ENCODE measurements at regions of chr1 and their contacts with region 1.

Region 1: DNA sequence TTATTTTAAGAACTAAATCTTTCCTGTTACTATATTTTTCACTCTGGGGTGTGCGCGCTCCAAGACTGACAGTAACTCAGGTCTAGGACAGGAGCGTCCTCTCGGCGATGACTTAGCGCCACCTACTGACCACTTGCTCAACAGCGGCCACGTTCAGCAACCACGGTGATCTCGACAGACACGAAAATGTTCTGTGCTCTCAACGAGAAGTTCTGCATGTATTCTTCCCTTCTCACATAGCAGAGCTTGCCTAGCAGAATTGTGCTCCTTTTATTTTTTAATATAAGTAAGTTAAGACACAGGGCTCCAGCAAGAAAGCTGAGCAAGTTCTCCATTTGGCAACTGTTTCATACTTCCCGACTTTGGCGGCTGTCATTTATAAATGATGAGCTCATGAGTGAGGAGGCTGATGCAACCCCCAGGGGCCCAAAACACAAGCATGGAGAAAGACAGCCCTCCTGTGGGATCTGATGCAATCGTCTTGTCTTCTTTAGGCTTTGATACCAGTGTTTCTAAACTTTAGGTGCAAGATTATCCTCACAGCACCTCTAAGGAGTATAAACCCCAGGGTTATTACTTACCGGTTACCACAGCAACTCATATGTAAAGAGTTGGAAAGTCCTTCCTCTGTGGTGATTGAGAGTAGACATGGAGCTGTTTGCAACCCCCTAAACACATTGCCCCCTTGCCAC is 92.6 kb downstream of the HHIPL2 start:
- DNase-seq: peak; percentile 58 to 88 (median 82)
- ATAC-seq: peak; percentile 97
- H3K4me3 ChIP-seq: no peak overlapping the region
- H3K4me3 Mint-ChIP-seq: peak overlapping the region in 9 of 10 donors; percentile 0 to 75 (median 58)
- H3K27ac ChIP-seq: no peak overlapping the region
- H3K27ac Mint-ChIP-seq: peak overlapping the region; percentile 26 to 84 (median 65)
- H3K4me1 ChIP-seq: peaks cover 8 to 9% of the 10 kb centered on the region in 2 donors
- H3K4me1 Mint-ChIP-seq: peaks cover 8 to 31% (median 15%) of the 10 kb centered on the region in 7 donors
- H3K27me3 ChIP-seq: no peaks in the 10 kb centered on the region
- H3K27me3 Mint-ChIP-seq: peaks cover 0 to 4% (median 0%) of the 10 kb centered on the region in 5 donors

Region 2: GRCh38 chr1:221263831-221264767 is 1191.2 kb before region 1 on chr1:
- CTCF ChIA-PET with region 1: no interaction called
- POLR2A ChIA-PET with region 1: no interaction called
- intact Hi-C with region 1: loop called in 1 of 2 experiments (anchors 10 kb)
- DNase-seq: peak in 3 of 9 donors; percentile 1 to 19 (median 4)
- ATAC-seq: no peak
- H3K4me3 ChIP-seq: no peak overlapping the region
- H3K4me3 Mint-ChIP-seq: no peak overlapping the region
- H3K27ac ChIP-seq: no peak overlapping the region
- H3K27ac Mint-ChIP-seq: no peak overlapping the region
- H3K4me1 ChIP-seq: no peaks in the 10 kb centered on the region
- H3K4me1 Mint-ChIP-seq: no peaks in the 10 kb centered on the region
- H3K27me3 ChIP-seq: no peaks in the 10 kb centered on the region
- H3K27me3 Mint-ChIP-seq: peaks cover 0 to 6% (median 5%) of the 10 kb centered on the region in 5 donors

Region 3: DNA sequence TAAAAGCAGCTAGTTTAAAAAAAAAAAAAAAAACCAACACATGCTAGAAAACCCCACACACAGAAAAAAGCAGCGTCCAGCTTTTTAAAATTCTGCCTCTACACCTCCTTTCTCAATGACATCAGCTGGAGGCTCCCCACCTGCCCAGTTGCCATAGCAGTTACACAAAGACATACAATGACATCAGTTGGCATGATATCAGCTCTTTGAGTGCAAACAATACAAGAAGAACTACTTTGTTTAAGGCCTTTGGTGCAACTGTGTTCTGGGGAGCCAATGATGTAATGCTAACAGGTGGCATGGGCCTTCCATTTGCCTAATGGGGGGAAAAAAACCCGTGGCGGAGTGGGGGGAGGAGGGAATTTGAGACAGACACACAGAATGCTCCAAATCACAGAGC is 746.3 kb before region 1 on chr1:
- CTCF ChIA-PET with region 1: no interaction called
- POLR2A ChIA-PET with region 1: no interaction called
- intact Hi-C with region 1: loop called in 1 of 2 experiments (anchors 10 kb)
- DNase-seq: peak in 6 of 9 donors; percentile 27 to 86 (median 53)
- ATAC-seq: peak; percentile 63
- H3K4me3 ChIP-seq: no peak overlapping the region
- H3K4me3 Mint-ChIP-seq: peak overlapping the region in 3 of 10 donors; percentile 6 to 20 (median 15)
- H3K27ac ChIP-seq: no peak overlapping the region
- H3K27ac Mint-ChIP-seq: peak overlapping the region; percentile 14 to 81 (median 68)
- H3K4me1 ChIP-seq: peaks cover 20 to 58% of the 10 kb centered on the region in 2 donors
- H3K4me1 Mint-ChIP-seq: peaks cover 30 to 72% (median 57%) of the 10 kb centered on the region in 7 donors
- H3K27me3 ChIP-seq: no peaks in the 10 kb centered on the region
- H3K27me3 Mint-ChIP-seq: no peaks in the 10 kb centered on the region

Region 4: GRCh38 chr1:222009105-222009730 is 446.1 kb before region 1 on chr1:
- CTCF ChIA-PET with region 1: interaction called, 9 read pairs
- POLR2A ChIA-PET with region 1: interaction called, 3 read pairs
- intact Hi-C with region 1: loop called in 1 of 2 experiments (anchors 1 kb)
- DNase-seq: peak in 6 of 9 donors; percentile 1 to 36 (median 27)
- ATAC-seq: peak; percentile 67
- H3K4me3 ChIP-seq: no peak overlapping the region
- H3K4me3 Mint-ChIP-seq: peak overlapping the region in 5 of 10 donors; percentile 6 to 53 (median 31)
- H3K27ac ChIP-seq: no peak overlapping the region
- H3K27ac Mint-ChIP-seq: peak overlapping the region in 1 of 9 donors; percentile 31
- H3K4me1 ChIP-seq: no peaks in the 10 kb centered on the region
- H3K4me1 Mint-ChIP-seq: peaks cover 0 to 4% (median 0%) of the 10 kb centered on the region in 7 donors
- H3K27me3 ChIP-seq: no peaks in the 10 kb centered on the region
- H3K27me3 Mint-ChIP-seq: peaks cover 0 to 25% (median 0%) of the 10 kb centered on the region in 5 donors

Region 5: GRCh38 chr1:222216255-222216754 is 239.0 kb before region 1 on chr1:
- CTCF ChIA-PET with region 1: no interaction called
- POLR2A ChIA-PET with region 1: no interaction called
- intact Hi-C with region 1: loop called in 1 of 2 experiments (anchors 1 kb)
- DNase-seq: no peak
- ATAC-seq: no peak
- H3K4me3 ChIP-seq: no peak overlapping the region
- H3K4me3 Mint-ChIP-seq: no peak overlapping the region
- H3K27ac ChIP-seq: no peak overlapping the region
- H3K27ac Mint-ChIP-seq: no peak overlapping the region
- H3K4me1 ChIP-seq: no peaks in the 10 kb centered on the region
- H3K4me1 Mint-ChIP-seq: no peaks in the 10 kb centered on the region
- H3K27me3 ChIP-seq: no peaks in the 10 kb centered on the region
- H3K27me3 Mint-ChIP-seq: peaks cover 0 to 12% (median 4%) of the 10 kb centered on the region in 5 donors

Region 6: GRCh38 chr1:222443566-222443965 is 11.8 kb before region 1 on chr1:
- CTCF ChIA-PET with region 1: interaction called, 32 read pairs
- POLR2A ChIA-PET with region 1: interaction called, 14 read pairs
- intact Hi-C with region 1: no loop called
- DNase-seq: peak in 2 of 9 donors; percentile 8 to 16
- ATAC-seq: no peak
- H3K4me3 ChIP-seq: no peak overlapping the region
- H3K4me3 Mint-ChIP-seq: peak overlapping the region in 3 of 10 donors; percentile 31 to 36 (median 35)
- H3K27ac ChIP-seq: no peak overlapping the region
- H3K27ac Mint-ChIP-seq: peak overlapping the region in 5 of 9 donors; percentile 6 to 68 (median 29)
- H3K4me1 ChIP-seq: peaks cover 0 to 11% of the 10 kb centered on the region in 2 donors
- H3K4me1 Mint-ChIP-seq: peaks cover 0 to 68% (median 49%) of the 10 kb centered on the region in 7 donors
- H3K27me3 ChIP-seq: no peaks in the 10 kb centered on the region
- H3K27me3 Mint-ChIP-seq: peaks cover 0 to 8% (median 0%) of the 10 kb centered on the region in 5 donors

Region 7: GRCh38 chr1:223363856-223364684 is 908.7 kb after region 1 on chr1 and contains the start of gene SUSD4:
- CTCF ChIA-PET with region 1: no interaction called
- POLR2A ChIA-PET with region 1: no interaction called
- intact Hi-C with region 1: no loop called
- DNase-seq: peak; percentile 54 to 87 (median 81)
- ATAC-seq: peak; percentile 92
- H3K4me3 ChIP-seq: peak within 1 kb of the TSS; percentile 83
- H3K4me3 Mint-ChIP-seq: peak within 1 kb of the TSS; percentile 83 to 96 (median 94)
- H3K27ac ChIP-seq: peak within 1 kb of the TSS; percentile 44
- H3K27ac Mint-ChIP-seq: peak within 1 kb of the TSS in 8 of 9 donors; percentile 61 to 91 (median 72)
- H3K4me1 ChIP-seq: no peaks in the 10 kb centered on the region
- H3K4me1 Mint-ChIP-seq: peaks cover 7 to 29% (median 27%) of the 10 kb centered on the region in 7 donors
- H3K27me3 ChIP-seq: no peaks in the 10 kb centered on the region
- H3K27me3 Mint-ChIP-seq: peaks cover 0 to 68% (median 0%) of the 10 kb centered on the region in 5 donors
- total RNA-seq, gene SUSD4: 0.10 to 20.3 (median 7.1) TPM